GM12878 (cell line): ENCODE measurements at regions of chr14 and their contacts with region 1.

Region 1: GRCh38 chr14:32331206-32331605 is 2.1 kb downstream of the AKAP6 start:
- DNase-seq: no peak
- ATAC-seq: no peak
- H3K4me3 ChIP-seq: no peak overlapping the region
- H3K27ac ChIP-seq: no peak overlapping the region
- H3K4me1 ChIP-seq: no peaks in the 10 kb centered on the region
- H3K27me3 ChIP-seq: no peaks in the 10 kb centered on the region
- CTCF ChIP-seq: no peak
- EP300 ChIP-seq: no peak
- POLR2A ChIP-seq: no peak
- RAD21 ChIP-seq: no peak

Region 2: DNA sequence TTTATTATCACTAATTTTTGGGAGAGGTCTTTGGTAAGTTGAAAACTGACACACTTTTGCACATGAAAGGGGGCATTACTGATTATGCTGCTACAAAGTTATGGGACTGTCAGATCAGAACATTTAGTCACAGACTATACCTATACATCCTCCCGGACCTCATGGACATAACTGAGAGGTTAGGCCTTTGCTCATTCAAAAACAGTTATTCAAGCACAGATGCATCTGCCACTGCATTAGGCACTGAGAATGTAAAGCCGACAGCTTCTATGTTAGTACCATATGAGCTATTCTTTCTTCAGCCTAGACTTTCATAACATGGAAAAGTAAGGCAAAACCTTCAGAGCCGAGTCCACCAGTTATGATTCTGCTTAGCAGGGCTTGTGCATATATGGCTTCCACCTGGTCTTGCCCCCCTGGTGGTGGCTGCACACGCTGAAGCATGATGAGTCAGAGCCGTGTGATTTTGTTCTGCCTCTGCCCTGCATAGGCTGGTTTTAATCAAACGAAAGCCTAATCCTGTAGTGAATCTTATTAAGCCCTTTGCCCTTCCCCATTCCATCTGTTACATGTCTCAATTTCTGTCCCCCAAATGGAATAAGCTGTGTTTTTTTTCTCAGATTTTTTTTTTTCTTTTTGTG is 106.3 kb before region 1 on chr14:
- CTCF ChIA-PET with region 1: no interaction called
- POLR2A ChIA-PET with region 1: no interaction called
- RAD21 ChIA-PET with region 1: no interaction called
- SMC1A ChIA-PET with region 1: no interaction called
- in situ Hi-C with region 1: no loop called
- intact Hi-C with region 1: no loop called
- DNase-seq: no peak
- ATAC-seq: peak; percentile 96
- H3K4me3 ChIP-seq: no peak overlapping the region
- H3K27ac ChIP-seq: no peak overlapping the region
- H3K4me1 ChIP-seq: no peaks in the 10 kb centered on the region
- H3K27me3 ChIP-seq: no peaks in the 10 kb centered on the region; a peak in 1 of 4 replicates
- CTCF ChIP-seq: peak in 2 of 3 experiments; percentile 19 to 22; a peak in 1 of 6 replicates
- EP300 ChIP-seq: no peak
- POLR2A ChIP-seq: no peak
- RAD21 ChIP-seq: no peak

Region 3: GRCh38 chr14:32341947-32342846 is 11.0 kb after region 1 on chr14:
- CTCF ChIA-PET with region 1: interaction called, 4 read pairs
- POLR2A ChIA-PET with region 1: no interaction called
- RAD21 ChIA-PET with region 1: interaction called, 3 read pairs
- SMC1A ChIA-PET with region 1: interaction called, 10 read pairs
- in situ Hi-C with region 1: no loop called
- intact Hi-C with region 1: no loop called
- DNase-seq: no peak
- ATAC-seq: no peak
- H3K4me3 ChIP-seq: no peak overlapping the region
- H3K27ac ChIP-seq: no peak overlapping the region
- H3K4me1 ChIP-seq: no peaks in the 10 kb centered on the region
- H3K27me3 ChIP-seq: no peaks in the 10 kb centered on the region
- CTCF ChIP-seq: no peak
- EP300 ChIP-seq: no peak
- POLR2A ChIP-seq: no peak
- RAD21 ChIP-seq: no peak

Region 4: GRCh38 chr14:32443890-32444661 is 112.9 kb after region 1 on chr14:
- CTCF ChIA-PET with region 1: no interaction called
- POLR2A ChIA-PET with region 1: no interaction called
- RAD21 ChIA-PET with region 1: no interaction called
- SMC1A ChIA-PET with region 1: no interaction called
- in situ Hi-C with region 1: no loop called
- intact Hi-C with region 1: no loop called
- DNase-seq: no peak
- ATAC-seq: no peak
- H3K4me3 ChIP-seq: no peak overlapping the region
- H3K27ac ChIP-seq: no peak overlapping the region
- H3K4me1 ChIP-seq: peaks cover 2% of the 10 kb centered on the region
- H3K27me3 ChIP-seq: no peaks in the 10 kb centered on the region
- CTCF ChIP-seq: no peak
- EP300 ChIP-seq: no peak
- POLR2A ChIP-seq: no peak
- RAD21 ChIP-seq: no peak